ENCODE measurements at regions of chr7 and their contacts with region 1.

Region 1: DNA sequence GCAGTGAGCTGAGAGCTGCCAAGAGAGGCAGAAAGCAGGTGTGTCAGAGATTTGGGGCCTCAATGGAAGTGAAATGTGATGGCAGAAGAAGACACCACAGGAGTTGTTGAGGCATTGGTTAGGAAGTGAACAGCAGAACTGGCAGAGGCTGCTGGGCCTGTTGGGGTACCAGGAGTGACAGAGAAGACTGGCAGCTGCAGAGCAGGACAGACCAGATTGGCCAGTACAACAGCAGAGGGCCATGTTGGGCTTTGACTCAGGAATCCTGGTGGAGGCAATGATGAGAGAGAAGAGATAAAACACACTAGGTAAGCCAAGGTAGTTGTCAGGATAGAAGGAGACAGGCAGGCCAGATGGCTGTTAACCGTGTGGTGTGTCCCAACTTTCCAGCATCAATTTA is 19.9 kb upstream of the HERPUD2 start:
- DNase-seq: no peak
- ATAC-seq: no peak
- H3K4me3 ChIP-seq: no peak overlapping the region
- H3K27ac ChIP-seq: no peak overlapping the region
- H3K4me1 ChIP-seq: peaks cover 3 to 7% of the 10 kb centered on the region in 2 donors
- H3K27me3 ChIP-seq: no peaks in the 10 kb centered on the region
- CTCF ChIP-seq: no peak

Region 2: GRCh38 chr7:35792873-35793489 is 78.1 kb after region 1 on chr7:
- intact Hi-C with region 1: no loop called
- DNase-seq: no peak
- ATAC-seq: peak; percentile 69
- H3K4me3 ChIP-seq: no peak overlapping the region
- H3K27ac ChIP-seq: no peak overlapping the region
- H3K4me1 ChIP-seq: peaks cover 0 to 4% of the 10 kb centered on the region in 2 donors
- H3K27me3 ChIP-seq: no peaks in the 10 kb centered on the region
- CTCF ChIP-seq: no peak

Region 3: GRCh38 chr7:35906191-35906908 is 191.5 kb after region 1 on chr7:
- intact Hi-C with region 1: loop called in 1 of 2 experiments (anchors 5 kb)
- DNase-seq: peak in 2 of 4 donors; percentile 78 to 83
- ATAC-seq: peak; percentile 98
- H3K4me3 ChIP-seq: no peak overlapping the region
- H3K27ac ChIP-seq: no peak overlapping the region
- H3K4me1 ChIP-seq: no peaks in the 10 kb centered on the region
- H3K27me3 ChIP-seq: no peaks in the 10 kb centered on the region
- CTCF ChIP-seq: peak; percentile 84 to 85

Measured in left lung (tissue), 14 donors.